GM10248 (cell line): ENCODE measurements at regions of chr11 and their contacts with region 1.

Region 1: DNA sequence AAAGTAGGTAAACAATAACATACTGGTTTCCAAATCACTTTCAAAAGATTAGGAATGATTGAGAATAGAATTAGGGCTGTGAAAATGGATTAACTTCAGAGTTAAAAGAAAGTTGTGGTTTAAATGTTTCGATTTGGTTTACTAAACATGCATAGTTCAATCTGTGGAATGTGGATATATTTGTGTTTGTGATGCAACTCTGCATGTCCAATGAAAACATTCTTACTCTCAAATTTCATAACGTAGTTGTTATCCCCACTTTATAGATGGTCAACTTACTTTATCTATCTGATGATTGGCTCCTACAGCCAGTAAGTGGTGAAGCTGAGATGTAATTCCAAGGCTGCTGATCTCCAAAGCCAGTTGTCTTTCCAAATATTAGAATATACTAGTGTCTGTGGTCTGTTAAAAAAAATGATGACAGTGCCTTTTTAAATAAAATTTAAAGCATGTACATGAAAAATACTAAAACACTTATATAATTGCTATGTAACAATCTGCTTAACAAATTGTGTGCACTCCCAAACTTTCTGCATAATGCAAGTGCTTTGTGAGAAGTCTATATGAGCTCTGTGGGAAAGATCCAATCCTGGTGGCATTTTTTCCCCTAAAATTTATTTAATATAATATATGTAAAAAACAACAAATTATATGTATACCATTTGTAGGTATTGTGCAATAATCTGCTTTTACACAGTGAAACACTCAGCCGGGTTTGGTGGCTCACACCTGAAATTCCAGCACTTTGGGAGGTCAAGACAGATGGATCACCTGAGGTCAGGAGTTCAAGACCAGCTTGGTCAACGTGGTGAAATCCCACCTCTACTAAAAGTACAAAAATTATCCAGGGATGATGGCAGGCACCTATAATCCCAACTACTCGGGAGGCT is 9.7 kb upstream of the SIK3 start:
- DNase-seq: no peak
- CTCF ChIP-seq: no peak

Region 2: GRCh38 chr11:116732271-116733042 is 375.5 kb before region 1 on chr11:
- CTCF ChIA-PET with region 1: interaction called, 25 read pairs
- POLR2A ChIA-PET with region 1: no interaction called
- DNase-seq: peak; percentile 90
- CTCF ChIP-seq: peak; percentile 84

Region 3: DNA sequence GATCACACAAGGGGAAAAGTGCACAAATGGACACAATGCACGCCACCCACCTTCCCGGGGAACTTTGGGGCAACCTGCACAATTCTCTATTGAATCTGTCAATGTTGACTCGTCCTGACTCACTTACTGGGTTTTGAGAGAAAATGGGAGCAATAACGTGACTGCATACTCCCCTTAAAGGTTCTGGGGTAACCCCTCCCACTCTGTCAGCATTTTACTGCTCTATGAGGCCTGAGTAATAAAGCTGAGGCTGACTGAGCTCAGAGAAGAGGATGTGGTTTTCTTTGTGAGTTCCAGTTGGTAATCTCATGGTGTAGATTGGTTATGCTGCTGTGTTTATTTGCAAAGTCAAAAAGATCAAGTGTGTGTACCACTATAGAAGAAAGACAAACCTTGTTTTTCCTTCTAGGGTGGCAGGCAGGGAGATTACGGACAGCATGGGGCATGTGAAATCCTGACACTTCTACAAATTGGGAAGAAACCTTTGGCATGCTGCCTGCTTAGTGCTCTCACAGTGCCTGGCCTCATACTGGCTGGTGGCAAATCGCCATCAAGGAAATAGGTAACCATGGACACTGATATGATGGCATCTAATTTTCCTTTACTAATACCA is 254.4 kb before region 1 on chr11:
- CTCF ChIA-PET with region 1: interaction called, 16 read pairs
- POLR2A ChIA-PET with region 1: no interaction called
- DNase-seq: peak; percentile 88
- CTCF ChIP-seq: no peak

Region 4: GRCh38 chr11:116958246-116958645 is 149.7 kb before region 1 on chr11:
- CTCF ChIA-PET with region 1: interaction called, 10 read pairs
- POLR2A ChIA-PET with region 1: no interaction called
- DNase-seq: no peak
- CTCF ChIP-seq: no peak

Region 5: GRCh38 chr11:116993599-116993998 is 114.3 kb before region 1 on chr11:
- CTCF ChIA-PET with region 1: no interaction called
- POLR2A ChIA-PET with region 1: no interaction called
- DNase-seq: no peak
- CTCF ChIP-seq: no peak

Region 6: GRCh38 chr11:117071344-117071787 is 36.6 kb before region 1 on chr11:
- CTCF ChIA-PET with region 1: no interaction called
- POLR2A ChIA-PET with region 1: no interaction called
- DNase-seq: no peak
- CTCF ChIP-seq: no peak

Region 7: GRCh38 chr11:117083011-117083935 is 24.7 kb before region 1 on chr11:
- CTCF ChIA-PET with region 1: no interaction called
- POLR2A ChIA-PET with region 1: no interaction called
- DNase-seq: no peak
- CTCF ChIP-seq: no peak

Region 8: DNA sequence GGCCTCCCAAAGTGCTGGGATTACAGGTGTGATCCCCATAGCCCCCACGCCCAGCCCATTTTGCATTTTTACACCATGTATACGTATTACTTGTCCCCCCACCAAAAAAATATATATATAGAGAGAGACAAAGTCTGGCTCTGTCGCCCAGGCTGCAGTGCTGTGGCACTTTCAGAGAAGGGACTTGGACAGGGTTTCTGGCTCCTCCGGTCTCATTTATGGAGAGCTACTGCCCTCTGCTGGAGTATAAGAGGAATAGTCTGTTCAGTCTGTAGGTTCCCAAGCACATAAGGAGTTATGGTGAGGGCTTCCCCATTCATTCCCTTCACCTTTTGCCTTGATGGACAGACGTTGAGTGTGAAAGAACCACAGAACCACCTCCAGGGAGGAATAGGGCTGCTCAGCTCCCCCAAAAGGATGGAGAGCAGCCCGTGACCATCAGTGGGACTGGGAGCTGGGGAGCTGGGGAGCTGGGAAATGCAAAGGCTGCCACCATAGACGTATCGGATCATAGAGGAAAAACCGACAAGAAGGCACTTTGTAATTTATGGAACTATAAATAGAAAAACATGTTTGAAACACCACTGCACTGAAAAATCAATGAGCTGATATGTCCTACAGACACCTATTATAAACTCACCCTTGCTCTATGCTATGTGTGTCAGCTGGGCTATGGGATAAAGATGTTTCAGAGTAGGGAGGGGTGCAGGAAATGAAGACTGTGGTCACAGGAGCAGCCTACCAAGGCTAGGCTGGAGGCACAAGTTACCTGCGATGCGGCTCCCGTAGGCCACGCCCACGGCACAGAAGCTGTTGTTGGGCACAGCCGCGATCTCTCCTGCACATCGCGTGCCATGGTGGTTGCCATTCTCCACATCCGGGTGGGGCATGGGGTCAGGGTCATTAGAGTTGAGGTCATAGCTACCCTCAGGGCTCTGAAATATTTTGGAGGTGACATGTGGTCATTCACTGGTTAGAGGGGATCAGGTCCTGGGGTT is 118.7 kb after region 1 on chr11:
- CTCF ChIA-PET with region 1: interaction called, 15 read pairs
- POLR2A ChIA-PET with region 1: no interaction called
- DNase-seq: peak; percentile 82
- CTCF ChIP-seq: peak; percentile 81